Calu3 (cell line): ENCODE measurements at regions of chr2 and their contacts with region 1.

Region 1: DNA sequence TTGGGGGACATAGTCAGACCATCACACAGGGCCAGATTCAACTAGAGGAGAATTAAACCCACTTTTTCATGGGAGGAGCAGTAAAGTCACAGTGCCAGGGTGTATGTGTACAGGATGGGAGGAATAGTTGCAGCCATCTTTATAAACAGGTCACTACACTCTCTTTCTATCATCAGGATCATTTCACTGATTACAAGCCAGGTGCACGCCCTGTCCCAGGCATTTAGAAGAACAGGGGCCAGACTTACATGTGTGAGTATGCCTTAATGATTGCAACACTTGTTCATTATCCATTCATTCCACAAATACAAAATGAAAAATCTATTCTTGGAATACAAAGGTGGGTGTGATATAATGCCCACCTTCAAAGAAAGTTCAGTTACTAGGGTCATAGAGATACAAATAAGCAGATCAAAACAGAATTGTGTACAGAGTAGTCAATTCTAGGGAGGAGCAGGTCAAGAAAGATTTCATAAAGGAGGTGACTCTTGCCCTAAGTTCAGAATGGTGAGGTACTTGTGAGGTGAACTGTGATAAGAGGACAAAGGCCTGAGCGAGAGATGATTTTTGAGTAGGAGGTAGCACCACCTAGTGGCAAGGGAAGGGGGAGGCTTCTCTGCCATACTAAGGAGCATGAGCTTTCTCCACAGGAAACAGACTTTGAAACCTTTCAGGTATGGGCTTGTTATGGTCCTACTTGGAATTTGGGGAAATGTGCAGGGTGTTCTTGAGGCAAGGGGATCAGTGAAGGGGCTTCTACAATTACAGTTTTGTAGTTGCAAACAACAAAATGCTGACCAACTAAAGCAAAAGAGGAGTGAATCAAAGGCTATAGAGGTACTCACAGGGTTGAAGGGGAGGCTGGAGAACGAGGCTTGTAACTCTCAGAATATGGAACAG is 156.3 kb downstream of the SUCLG1 start:
- DNase-seq: peak; percentile 59
- H3K4me3 Mint-ChIP-seq: no peak overlapping the region
- H3K27ac Mint-ChIP-seq: no peak overlapping the region
- H3K4me1 Mint-ChIP-seq: no peaks in the 10 kb centered on the region
- H3K27me3 Mint-ChIP-seq: peaks cover 70% of the 10 kb centered on the region
- CTCF ChIP-seq: peak; percentile 60

Region 2: GRCh38 chr2:84022810-84023431 is 279.8 kb before region 1 on chr2:
- CTCF ChIA-PET with region 1: interaction called, 9 read pairs
- intact Hi-C with region 1: loop called (anchors 2 kb)
- DNase-seq: peak; percentile 60
- H3K4me3 Mint-ChIP-seq: no peak overlapping the region
- H3K27ac Mint-ChIP-seq: no peak overlapping the region
- H3K4me1 Mint-ChIP-seq: no peaks in the 10 kb centered on the region
- H3K27me3 Mint-ChIP-seq: no peaks in the 10 kb centered on the region
- CTCF ChIP-seq: peak; percentile 44